ENCODE measurements at regions of chr1 and their contacts with region 1.

Region 1: GRCh38 chr1:214454619-214455396 is 96.6 kb downstream of the PTPN14 start:
- DNase-seq: no peak
- H3K4me3 ChIP-seq: no peak overlapping the region
- H3K27ac ChIP-seq: no peak overlapping the region
- H3K4me1 ChIP-seq: peaks cover 1 to 19% (median 9%) of the 10 kb centered on the region in 4 experiments; a peak in 5 of 7 replicates
- H3K27me3 ChIP-seq: no peaks in the 10 kb centered on the region
- CTCF ChIP-seq: no peak
- EP300 ChIP-seq: no peak
- POLR2A ChIP-seq: no peak
- RAD21 ChIP-seq: no peak

Region 2: DNA sequence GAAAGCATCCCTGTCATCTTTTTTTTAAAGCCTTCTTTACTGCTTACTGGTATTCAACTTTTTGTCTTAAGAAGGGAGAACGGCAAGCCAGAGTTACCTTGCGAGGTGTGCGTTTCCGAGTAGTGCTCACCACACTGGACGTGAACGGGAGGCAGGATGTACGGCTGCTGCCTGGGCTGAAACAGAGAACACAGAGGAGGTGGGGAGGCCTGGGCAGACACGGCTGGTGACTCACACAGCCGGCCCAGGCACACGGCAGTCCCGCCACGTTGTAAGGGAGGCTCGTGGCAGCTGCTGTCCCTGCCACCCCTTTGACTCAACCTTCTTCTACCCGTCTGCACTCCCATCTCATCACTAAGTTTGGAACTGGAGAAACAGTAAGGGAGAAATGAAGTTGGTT is 68.1 kb before region 1 on chr1:
- CTCF ChIA-PET with region 1: interaction called, 38 read pairs
- POLR2A ChIA-PET with region 1: no interaction called
- DNase-seq: peak in 1 of 2 experiments; percentile 33
- H3K4me3 ChIP-seq: no peak overlapping the region
- H3K27ac ChIP-seq: no peak overlapping the region
- H3K4me1 ChIP-seq: peaks cover 0 to 5% (median 2%) of the 10 kb centered on the region in 4 experiments; a peak in 3 of 7 replicates
- H3K27me3 ChIP-seq: no peaks in the 10 kb centered on the region
- CTCF ChIP-seq: no peak
- EP300 ChIP-seq: no peak
- POLR2A ChIP-seq: no peak
- RAD21 ChIP-seq: no peak

Region 3: DNA sequence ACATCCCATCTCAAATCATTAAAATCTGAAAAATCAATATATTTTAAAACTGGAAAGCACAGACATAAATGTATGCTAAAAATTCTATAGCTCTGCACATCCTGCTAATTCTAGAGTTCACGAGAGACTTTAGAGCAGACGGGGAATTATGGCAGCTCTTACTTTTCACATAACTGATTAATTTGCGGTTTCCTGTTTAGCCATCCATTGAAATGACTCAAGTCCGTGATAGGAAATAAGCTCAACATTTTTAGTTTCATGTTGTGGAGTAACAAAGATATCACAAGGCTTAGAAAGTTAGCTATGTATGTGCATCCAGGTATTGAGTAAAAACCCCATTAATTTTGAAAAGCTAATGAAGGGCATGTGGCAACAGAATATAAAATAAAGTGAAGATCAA is 50.7 kb before region 1 on chr1:
- CTCF ChIA-PET with region 1: interaction called, 21 read pairs
- POLR2A ChIA-PET with region 1: no interaction called
- DNase-seq: no peak
- H3K4me3 ChIP-seq: no peak overlapping the region
- H3K27ac ChIP-seq: no peak overlapping the region
- H3K4me1 ChIP-seq: peaks cover 6 to 13% (median 10%) of the 10 kb centered on the region in 4 experiments
- H3K27me3 ChIP-seq: no peaks in the 10 kb centered on the region
- CTCF ChIP-seq: no peak
- EP300 ChIP-seq: no peak
- POLR2A ChIP-seq: no peak
- RAD21 ChIP-seq: no peak

Region 4: GRCh38 chr1:214466403-214467077 is 11.7 kb after region 1 on chr1:
- CTCF ChIA-PET with region 1: interaction called, 19 read pairs
- POLR2A ChIA-PET with region 1: no interaction called
- DNase-seq: no peak
- H3K4me3 ChIP-seq: no peak overlapping the region
- H3K27ac ChIP-seq: 0 out of 2 replicates have a peak overlapping the region, but pooled peaks have one; percentile 27
- H3K4me1 ChIP-seq: peaks cover 0 to 13% (median 4%) of the 10 kb centered on the region in 4 experiments; a peak in 5 of 7 replicates
- H3K27me3 ChIP-seq: no peaks in the 10 kb centered on the region
- CTCF ChIP-seq: no peak
- EP300 ChIP-seq: no peak
- POLR2A ChIP-seq: no peak
- RAD21 ChIP-seq: no peak

Region 5: DNA sequence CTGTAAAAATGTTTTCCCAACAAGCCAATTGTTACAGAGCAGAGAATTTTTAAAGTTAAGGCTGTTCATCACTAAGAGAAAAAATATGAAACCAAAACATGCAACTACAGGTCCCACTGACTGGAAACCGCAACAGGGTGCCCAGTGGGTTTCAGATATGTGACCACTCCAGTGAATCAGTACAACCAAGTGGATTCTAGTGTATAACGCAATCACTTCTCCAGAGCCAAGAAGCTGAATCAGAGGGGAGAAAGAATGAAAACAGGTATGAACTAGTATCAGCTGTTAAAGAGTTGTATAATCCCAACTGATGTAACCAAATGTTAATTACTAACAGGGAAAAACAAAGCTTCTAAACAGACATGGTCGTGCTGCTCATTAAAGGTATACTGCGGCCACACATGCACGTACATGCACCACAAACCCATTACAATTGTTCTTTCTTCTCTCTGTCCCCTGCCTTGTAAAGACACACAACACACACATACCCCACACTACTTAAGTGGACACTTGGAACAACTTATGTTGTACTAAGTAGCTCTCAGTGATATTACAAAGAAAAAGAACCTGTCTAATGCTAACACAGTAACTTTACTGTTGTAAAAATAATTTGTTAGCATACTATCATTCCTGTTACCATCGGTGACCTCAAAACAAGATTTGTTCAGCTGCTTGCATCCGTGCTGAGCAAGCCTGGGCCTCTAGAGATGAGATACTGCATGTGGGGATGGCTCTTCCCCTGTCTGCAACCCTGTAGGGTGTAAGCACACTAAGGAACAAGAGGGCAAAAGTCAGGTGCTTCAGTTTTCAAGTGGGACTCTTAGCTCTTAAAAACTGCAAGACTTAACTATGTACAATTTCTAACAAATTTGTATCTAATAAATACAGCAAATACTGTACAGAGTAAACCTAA is 22.4 kb after region 1 on chr1:
- CTCF ChIA-PET with region 1: interaction called, 19 read pairs
- POLR2A ChIA-PET with region 1: no interaction called
- DNase-seq: no peak
- H3K4me3 ChIP-seq: no peak overlapping the region
- H3K27ac ChIP-seq: no peak overlapping the region
- H3K4me1 ChIP-seq: peaks cover 0 to 20% (median 10%) of the 10 kb centered on the region in 4 experiments; a peak in 5 of 7 replicates
- H3K27me3 ChIP-seq: no peaks in the 10 kb centered on the region
- CTCF ChIP-seq: no peak
- EP300 ChIP-seq: no peak
- POLR2A ChIP-seq: no peak
- RAD21 ChIP-seq: no peak

Region 6: GRCh38 chr1:214506972-214507482 is 52.2 kb after region 1 on chr1:
- CTCF ChIA-PET with region 1: no interaction called
- POLR2A ChIA-PET with region 1: no interaction called
- DNase-seq: no peak
- H3K4me3 ChIP-seq: no peak overlapping the region
- H3K27ac ChIP-seq: no peak overlapping the region
- H3K4me1 ChIP-seq: peaks cover 0 to 11% (median 6%) of the 10 kb centered on the region in 4 experiments; a peak in 4 of 7 replicates
- H3K27me3 ChIP-seq: no peaks in the 10 kb centered on the region
- CTCF ChIP-seq: no peak
- EP300 ChIP-seq: no peak
- POLR2A ChIP-seq: no peak
- RAD21 ChIP-seq: no peak